Thyroid gland (tissue), 4 donors: ENCODE measurements at regions of chr18 and their contacts with region 1.

Region 1: GRCh38 chr18:45967007-45967706 is at the start of gene EPG5:
- DNase-seq: peak; percentile 99
- H3K4me3 ChIP-seq: peak within 1 kb of the TSS; percentile 21 to 94 (median 56)
- H3K27ac ChIP-seq: peak within 1 kb of the TSS in 2 of 3 donors; percentile 73 to 90
- H3K4me1 ChIP-seq: peaks cover 20 to 29% of the 10 kb centered on the region in 2 donors
- H3K27me3 ChIP-seq: no peaks in the 10 kb centered on the region
- CTCF ChIP-seq: peak in 1 of 6 experiments; percentile 3
- POLR2A ChIP-seq: peak; percentile 38 to 86
- total RNA-seq, gene EPG5: 39.1 to 105 (median 59.0) TPM

Region 2: GRCh38 chr18:45839414-45840395 is 127.5 kb before region 1 on chr18:
- intact Hi-C with region 1: no loop called
- DNase-seq: peak in 1 of 2 donors; percentile 37
- H3K4me3 ChIP-seq: no peak overlapping the region
- H3K27ac ChIP-seq: no peak overlapping the region
- H3K4me1 ChIP-seq: peaks cover 17 to 24% of the 10 kb centered on the region in 2 donors
- H3K27me3 ChIP-seq: no peaks in the 10 kb centered on the region
- CTCF ChIP-seq: peak in 3 of 6 experiments; percentile 32 to 44 (median 32)
- POLR2A ChIP-seq: no peak

Region 3: DNA sequence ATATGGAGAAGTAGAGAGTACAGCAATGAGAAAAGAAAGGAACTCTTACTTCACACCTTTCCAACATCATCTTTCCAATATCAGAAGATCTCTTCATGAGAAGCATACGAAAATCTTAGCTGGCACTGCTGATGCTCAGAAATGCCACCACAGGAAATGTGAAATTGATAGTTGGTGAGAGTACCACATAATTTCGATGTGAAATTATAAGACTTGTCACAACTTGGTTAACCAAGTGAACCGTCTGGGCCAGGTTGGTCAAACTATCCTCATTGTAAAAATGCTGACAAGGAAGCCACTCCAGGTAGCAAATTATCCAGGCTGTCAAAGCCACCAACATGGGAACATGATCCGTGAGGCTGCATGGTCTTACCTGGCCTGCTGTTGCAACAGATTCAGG is 66.5 kb before region 1 on chr18:
- intact Hi-C with region 1: loop called (anchors 10 kb)
- DNase-seq: no peak
- H3K4me3 ChIP-seq: no peak overlapping the region
- H3K27ac ChIP-seq: no peak overlapping the region
- H3K4me1 ChIP-seq: no peaks in the 10 kb centered on the region
- H3K27me3 ChIP-seq: no peaks in the 10 kb centered on the region
- CTCF ChIP-seq: no peak
- POLR2A ChIP-seq: no peak

Region 4: GRCh38 chr18:46073474-46074331 is 106.5 kb after region 1 on chr18:
- intact Hi-C with region 1: loop called (anchors 10 kb)
- DNase-seq: peak; percentile 30 to 38
- H3K4me3 ChIP-seq: no peak overlapping the region
- H3K27ac ChIP-seq: no peak overlapping the region
- H3K4me1 ChIP-seq: peaks cover 6 to 29% of the 10 kb centered on the region in 2 donors
- H3K27me3 ChIP-seq: no peaks in the 10 kb centered on the region
- CTCF ChIP-seq: peak in 5 of 6 experiments; percentile 38 to 66 (median 62)
- POLR2A ChIP-seq: no peak